Left cardiac atrium (tissue), 4 donors: ENCODE measurements at regions of chr11 and their contacts with region 1.

Region 1: GRCh38 chr11:134050541-134051383 is 18.1 kb upstream of the JAM3 start:
- DNase-seq: peak; percentile 76
- ATAC-seq: peak; percentile 65 to 80

Region 2: GRCh38 chr11:133927690-133928627 is 122.8 kb before region 1 on chr11:
- intact Hi-C with region 1: loop called (anchors 5 to 10 kb)
- DNase-seq: peak; percentile 77
- ATAC-seq: peak; percentile 82 to 87

Region 3: DNA sequence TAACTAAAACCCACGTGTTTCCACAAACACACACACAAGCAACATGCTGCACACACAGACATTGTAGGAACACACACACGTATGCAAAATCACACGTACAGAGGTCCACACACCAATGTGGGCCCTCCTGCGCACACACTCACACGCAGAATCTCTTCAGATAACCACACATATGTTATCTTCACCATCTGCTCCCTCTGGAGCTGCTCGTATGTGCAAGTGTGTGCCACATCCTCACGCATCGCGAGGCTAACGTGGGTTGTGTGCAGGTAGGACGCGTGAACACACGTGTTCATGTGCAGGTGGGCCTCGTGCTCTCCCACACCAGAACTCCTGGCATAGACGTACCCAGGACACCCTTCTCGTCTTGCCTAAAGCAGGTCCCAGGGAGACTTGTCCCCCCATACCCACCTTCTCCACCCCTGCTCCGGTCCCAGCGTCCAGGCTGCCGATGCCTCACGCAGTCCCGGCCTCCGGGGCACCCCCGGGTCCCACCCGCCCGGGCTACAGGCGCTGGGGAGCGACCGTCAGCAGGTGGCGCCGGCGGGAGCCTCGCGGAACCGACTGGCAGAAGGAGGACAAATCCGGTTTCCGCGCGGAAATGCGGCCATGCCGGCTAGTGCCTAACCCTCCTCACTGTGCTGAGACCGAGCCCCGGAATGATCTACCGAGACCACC is 83.7 kb before region 1 on chr11:
- intact Hi-C with region 1: loop called (anchors 2 to 10 kb)
- DNase-seq: peak; percentile 74
- ATAC-seq: peak; percentile 22 to 45

Region 4: GRCh38 chr11:134139873-134140331 is 89.1 kb after region 1 on chr11:
- intact Hi-C with region 1: loop called (anchors 1 to 5 kb)
- DNase-seq: peak; percentile 64
- ATAC-seq: peak; percentile 79 to 86